PC-3 (cell line): ENCODE measurements at regions of chr2 and their contacts with region 1.

Region 1: DNA sequence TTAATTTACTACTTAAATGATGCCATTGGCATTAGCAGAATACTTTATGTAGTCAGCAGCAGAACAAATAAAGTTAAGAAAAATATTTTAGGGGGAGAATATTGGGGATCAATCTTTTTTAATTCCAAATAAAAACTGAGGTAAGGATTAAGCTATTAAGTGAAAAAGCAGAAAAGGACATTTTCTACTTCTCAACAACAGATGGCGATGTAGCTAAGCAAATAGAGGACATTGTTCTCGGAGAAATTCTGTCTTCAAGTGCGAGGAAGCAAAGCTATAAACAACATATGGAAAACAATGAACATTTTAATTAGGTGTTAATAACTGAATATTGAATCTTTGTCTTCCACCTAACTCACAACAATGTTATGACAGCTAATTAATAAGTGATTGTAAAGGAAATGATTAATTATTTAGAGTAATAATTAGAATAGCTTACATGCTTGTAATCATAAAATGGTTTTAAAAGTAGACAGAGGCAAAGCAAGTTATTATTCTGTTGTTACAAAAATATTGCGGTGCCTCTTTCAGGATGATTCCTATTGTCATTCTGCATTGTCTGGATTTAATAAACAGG is 32.9 kb upstream of the CCDC93 start:
- DNase-seq: peak; percentile 71
- ATAC-seq: peak; percentile 9; the same call in 1 of the 2 replicates
- H3K4me3 ChIP-seq: peak overlapping the region; percentile 45
- H3K27ac ChIP-seq: peak overlapping the region; percentile 66
- H3K4me1 ChIP-seq: peaks cover 53% of the 10 kb centered on the region
- H3K27me3 ChIP-seq: no peaks in the 10 kb centered on the region
- CTCF ChIP-seq: peak; percentile 87

Region 2: GRCh38 chr2:118061135-118061955 is 14.6 kb after region 1 on chr2:
- CTCF ChIA-PET with region 1: interaction called, 17 read pairs
- POLR2A ChIA-PET with region 1: no interaction called
- intact Hi-C with region 1: loop called (anchors 1 kb)
- DNase-seq: peak; percentile 78
- ATAC-seq: peak; percentile 76
- H3K4me3 ChIP-seq: no peak overlapping the region
- H3K27ac ChIP-seq: no peak overlapping the region
- H3K4me1 ChIP-seq: peaks cover 18% of the 10 kb centered on the region; the same call in 1 of the 2 replicates
- H3K27me3 ChIP-seq: no peaks in the 10 kb centered on the region
- CTCF ChIP-seq: peak; percentile 73

Region 3: DNA sequence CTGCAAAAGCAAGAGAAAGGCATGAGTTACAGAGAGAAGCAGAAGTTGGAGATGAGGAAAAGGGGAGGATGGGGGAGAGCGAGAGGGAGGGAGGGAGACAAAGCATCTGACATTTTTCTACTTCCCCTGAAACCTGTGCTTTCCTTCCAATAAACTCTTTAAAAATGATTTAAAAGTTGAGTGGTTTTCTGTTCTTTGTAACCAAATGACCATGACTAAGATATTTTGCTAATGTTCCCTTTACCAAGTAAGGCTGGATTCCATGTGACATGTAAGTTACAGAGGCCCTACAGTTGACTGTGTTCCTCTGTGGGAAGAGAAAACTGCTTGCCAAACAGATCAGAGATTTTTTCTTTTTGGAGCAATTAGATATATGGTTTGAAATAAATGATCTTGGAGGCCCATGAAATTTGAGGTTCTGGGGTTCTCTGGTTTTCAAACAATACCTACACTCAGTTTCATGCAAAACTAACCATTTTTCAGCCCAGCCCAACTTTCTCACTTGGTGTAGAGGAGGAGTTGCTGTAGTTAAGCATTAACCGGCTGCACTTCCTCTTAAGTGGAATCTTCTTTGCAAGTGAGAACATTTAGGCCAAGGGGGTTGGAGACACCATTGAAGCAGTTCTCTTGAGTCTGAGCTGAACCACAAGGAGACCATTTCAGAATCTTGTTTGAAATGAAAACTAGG is 76.0 kb after region 1 on chr2:
- CTCF ChIA-PET with region 1: interaction called, 10 read pairs
- POLR2A ChIA-PET with region 1: interaction called, 3 read pairs
- intact Hi-C with region 1: loop called (anchors 1 kb)
- DNase-seq: peak; percentile 59
- ATAC-seq: peak; percentile 17; the same call in 1 of the 2 replicates
- H3K4me3 ChIP-seq: peak overlapping the region; percentile 25; the same call in 1 of the 2 replicates
- H3K27ac ChIP-seq: peak overlapping the region; percentile 99
- H3K4me1 ChIP-seq: peaks cover 57% of the 10 kb centered on the region
- H3K27me3 ChIP-seq: no peaks in the 10 kb centered on the region
- CTCF ChIP-seq: no peak

Region 4: DNA sequence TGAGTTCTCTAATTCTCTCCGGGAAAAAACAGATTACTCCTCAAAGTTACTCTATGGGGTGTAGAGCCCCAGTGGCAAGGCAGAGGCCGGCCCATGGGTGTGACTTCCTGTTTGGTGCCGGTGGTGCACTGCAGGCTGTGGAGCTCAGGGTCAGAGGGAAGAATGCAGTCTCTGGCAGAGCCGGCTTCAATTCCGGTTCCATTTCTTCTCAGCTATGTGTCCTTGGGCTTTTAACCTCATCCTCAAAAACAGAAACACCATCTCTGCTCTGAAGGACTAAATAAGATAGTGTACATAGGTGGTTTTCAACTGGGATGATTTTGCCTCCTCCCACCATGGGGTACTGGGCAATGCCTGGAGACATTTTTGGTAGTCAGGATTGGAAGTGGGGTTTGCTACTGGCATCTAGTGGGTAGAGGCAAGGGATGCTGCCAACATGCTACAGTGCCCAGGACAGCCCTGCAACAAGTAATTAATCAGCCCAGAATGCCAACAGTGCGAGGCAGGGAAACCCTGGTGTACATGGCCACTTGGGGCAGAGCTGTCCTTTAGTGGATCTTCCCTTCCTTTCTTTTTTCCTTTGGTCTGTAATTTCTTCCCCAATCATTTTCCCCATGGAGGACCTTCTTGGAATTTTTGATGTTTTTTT is 122.8 kb after region 1 on chr2:
- CTCF ChIA-PET with region 1: no interaction called
- POLR2A ChIA-PET with region 1: no interaction called
- intact Hi-C with region 1: loop called (anchors 5 kb)
- DNase-seq: no peak
- ATAC-seq: peak; percentile 46; the same call in 1 of the 2 replicates
- H3K4me3 ChIP-seq: no peak overlapping the region
- H3K27ac ChIP-seq: no peak overlapping the region
- H3K4me1 ChIP-seq: peaks cover 12% of the 10 kb centered on the region
- H3K27me3 ChIP-seq: no peaks in the 10 kb centered on the region
- CTCF ChIP-seq: peak; percentile 19; the same call in 1 of the 2 replicates

Region 5: GRCh38 chr2:118202707-118203303 is 156.1 kb after region 1 on chr2:
- CTCF ChIA-PET with region 1: no interaction called
- POLR2A ChIA-PET with region 1: no interaction called
- intact Hi-C with region 1: loop called (anchors 5 kb)
- DNase-seq: peak; percentile 61
- ATAC-seq: peak; percentile 74
- H3K4me3 ChIP-seq: no peak overlapping the region
- H3K27ac ChIP-seq: no peak overlapping the region
- H3K4me1 ChIP-seq: no peaks in the 10 kb centered on the region
- H3K27me3 ChIP-seq: no peaks in the 10 kb centered on the region
- CTCF ChIP-seq: peak; percentile 81

Region 6: GRCh38 chr2:118232796-118233195 is 186.1 kb after region 1 on chr2:
- CTCF ChIA-PET with region 1: no interaction called
- POLR2A ChIA-PET with region 1: no interaction called
- intact Hi-C with region 1: no loop called
- DNase-seq: no peak
- ATAC-seq: no peak
- H3K4me3 ChIP-seq: no peak overlapping the region
- H3K27ac ChIP-seq: no peak overlapping the region
- H3K4me1 ChIP-seq: peaks cover 10% of the 10 kb centered on the region
- H3K27me3 ChIP-seq: no peaks in the 10 kb centered on the region
- CTCF ChIP-seq: no peak

Region 7: GRCh38 chr2:118386641-118387302 is 340.1 kb after region 1 on chr2:
- CTCF ChIA-PET with region 1: no interaction called
- POLR2A ChIA-PET with region 1: no interaction called
- intact Hi-C with region 1: loop called (anchors 5 kb)
- DNase-seq: peak; percentile 96
- ATAC-seq: peak; percentile 81
- H3K4me3 ChIP-seq: no peak overlapping the region
- H3K27ac ChIP-seq: peak overlapping the region; percentile 99
- H3K4me1 ChIP-seq: peaks cover 67% of the 10 kb centered on the region
- H3K27me3 ChIP-seq: no peaks in the 10 kb centered on the region
- CTCF ChIP-seq: no peak